A549 (cell line): ENCODE measurements at regions of chr16 and their contacts with region 1.

Region 1: GRCh38 chr16:78081341-78081740 is 18.1 kb upstream of the WWOX start:
- DNase-seq: no peak
- ATAC-seq: no peak
- H3K4me3 ChIP-seq: no peak overlapping the region
- H3K27ac ChIP-seq: no peak overlapping the region
- H3K4me1 ChIP-seq: no peaks in the 10 kb centered on the region
- CTCF ChIP-seq: no peak
- EP300 ChIP-seq: no peak
- POLR2A ChIP-seq: no peak
- RAD21 ChIP-seq: no peak

Region 2: DNA sequence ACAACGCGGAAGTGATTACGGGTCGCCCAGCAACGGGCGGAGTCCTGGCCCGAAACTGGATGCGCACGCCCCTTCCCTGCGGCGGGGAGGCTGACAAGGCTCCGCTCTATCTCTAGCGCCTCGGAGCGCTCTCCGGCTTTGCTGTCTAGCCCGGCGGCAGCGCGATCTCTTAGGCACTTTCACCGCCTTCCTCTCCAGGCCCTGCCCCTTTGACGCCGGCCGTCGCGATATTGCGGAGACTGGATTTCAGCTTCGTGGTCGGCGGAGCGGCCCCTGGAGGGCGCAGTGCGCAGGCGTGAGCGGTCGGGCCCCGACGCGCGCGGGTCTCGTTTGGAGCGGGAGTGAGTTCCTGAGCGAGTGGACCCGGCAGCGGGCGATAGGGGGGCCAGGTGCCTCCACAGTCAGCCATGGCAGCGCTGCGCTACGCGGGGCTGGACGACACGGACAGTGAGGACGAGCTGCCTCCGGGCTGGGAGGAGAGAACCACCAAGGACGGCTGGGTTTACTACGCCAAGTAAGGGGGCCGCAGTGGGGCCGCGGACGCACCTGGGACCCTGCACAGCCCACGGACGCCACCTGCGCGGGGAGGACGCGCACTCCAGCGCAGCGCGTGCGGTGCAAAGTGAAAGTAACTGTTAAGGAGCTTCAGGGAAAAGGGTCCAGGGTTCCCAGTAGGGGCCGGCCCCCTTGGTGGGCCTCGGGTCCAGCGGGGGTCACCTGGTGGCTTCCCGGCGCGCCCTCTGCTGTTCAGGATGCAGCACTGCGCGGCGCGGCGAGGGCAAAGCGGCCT is 18.2 kb after region 1 on chr16 and contains the start of gene WWOX:
- CTCF ChIA-PET with region 1: interaction called, 12 read pairs
- POLR2A ChIA-PET with region 1: interaction called, 3 read pairs
- DNase-seq: peak; percentile 89 to 97
- ATAC-seq: peak; percentile 95 to 97
- H3K4me3 ChIP-seq: peak within 1 kb of the TSS; percentile 83
- H3K27ac ChIP-seq: peak within 1 kb of the TSS; percentile 79 to 89
- H3K4me1 ChIP-seq: peaks cover 7% of the 10 kb centered on the region
- CTCF ChIP-seq: peak; percentile 85
- EP300 ChIP-seq: no peak
- POLR2A ChIP-seq: peak; percentile 67
- RAD21 ChIP-seq: peak; percentile 23 to 50
- polyA plus RNA-seq, gene WWOX: 12.9 and 16.0 TPM in 2 replicates

Region 3: GRCh38 chr16:78142788-78143187 is 61.4 kb after region 1 on chr16:
- CTCF ChIA-PET with region 1: no interaction called
- POLR2A ChIA-PET with region 1: no interaction called
- DNase-seq: no peak
- ATAC-seq: no peak
- H3K4me3 ChIP-seq: no peak overlapping the region
- H3K27ac ChIP-seq: no peak overlapping the region
- H3K4me1 ChIP-seq: no peaks in the 10 kb centered on the region
- CTCF ChIP-seq: no peak
- EP300 ChIP-seq: no peak
- POLR2A ChIP-seq: no peak
- RAD21 ChIP-seq: no peak